MCF 10A (cell line): ENCODE measurements at regions of chr4 and their contacts with region 1.

Region 1: DNA sequence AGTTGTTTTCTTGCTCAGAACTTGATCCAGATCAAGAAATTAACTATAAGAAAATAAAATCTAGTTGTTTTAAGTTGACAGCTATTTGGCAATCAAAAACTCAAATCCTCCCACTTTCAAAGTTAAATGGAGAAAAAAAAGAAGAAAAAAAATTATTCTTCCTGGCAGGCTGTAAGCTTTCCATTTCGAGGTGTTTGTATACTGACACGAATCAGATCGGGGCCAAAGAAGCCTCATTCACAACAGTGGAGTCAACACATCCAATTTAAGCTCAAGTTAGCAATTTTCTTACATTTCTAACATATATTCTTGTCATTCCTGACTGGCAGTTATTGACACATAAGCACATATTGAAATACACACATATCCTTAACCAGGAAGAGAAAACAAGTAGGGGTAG is 119.4 kb downstream of the UNC5C start:
- DNase-seq: no peak
- H3K4me3 Mint-ChIP-seq: no peak overlapping the region
- H3K27ac Mint-ChIP-seq: no peak overlapping the region
- H3K4me1 Mint-ChIP-seq: no peaks in the 10 kb centered on the region
- H3K27me3 Mint-ChIP-seq: no peaks in the 10 kb centered on the region
- CTCF ChIP-seq: no peak

Region 2: GRCh38 chr4:94534401-94535312 is 894.8 kb before region 1 on chr4:
- CTCF ChIA-PET with region 1: no interaction called
- POLR2A ChIA-PET with region 1: no interaction called
- intact Hi-C with region 1: no loop called
- DNase-seq: no peak
- H3K4me3 Mint-ChIP-seq: no peak overlapping the region
- H3K27ac Mint-ChIP-seq: peak overlapping the region; percentile 46
- H3K4me1 Mint-ChIP-seq: peaks cover 21% of the 10 kb centered on the region
- H3K27me3 Mint-ChIP-seq: no peaks in the 10 kb centered on the region
- CTCF ChIP-seq: no peak

Region 3: GRCh38 chr4:95889662-95890061 is 460.2 kb after region 1 on chr4:
- CTCF ChIA-PET with region 1: interaction called, 10 read pairs
- POLR2A ChIA-PET with region 1: no interaction called
- intact Hi-C with region 1: no loop called
- DNase-seq: peak; percentile 32
- H3K4me3 Mint-ChIP-seq: no peak overlapping the region
- H3K27ac Mint-ChIP-seq: no peak overlapping the region
- H3K4me1 Mint-ChIP-seq: no peaks in the 10 kb centered on the region
- H3K27me3 Mint-ChIP-seq: no peaks in the 10 kb centered on the region
- CTCF ChIP-seq: no peak